CD8-positive, alpha-beta memory T cell (primary cell): ENCODE measurements at regions of chr3 and their contacts with region 1.

Region 1: DNA sequence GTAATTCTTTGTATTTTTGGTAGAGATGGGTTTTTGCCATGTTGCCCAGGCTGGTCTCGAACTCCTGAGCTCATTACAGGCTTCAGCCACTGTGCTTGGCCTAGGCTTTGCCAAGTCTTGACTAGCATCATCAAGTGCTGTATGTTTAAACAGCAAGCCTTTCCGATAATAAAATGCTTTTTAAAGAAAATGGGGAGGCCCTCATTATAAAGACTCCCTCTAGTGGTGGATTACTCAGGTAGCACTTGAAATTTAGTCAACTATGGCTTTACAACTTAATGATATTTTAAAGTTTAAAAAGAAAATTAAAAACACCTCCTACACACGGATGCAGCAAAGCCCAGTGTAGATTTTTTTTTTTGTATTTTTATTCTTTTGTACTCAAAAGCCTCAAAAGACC is 213.6 kb downstream of the GAP43 start:
- DNase-seq: no peak
- H3K4me3 ChIP-seq: no peak overlapping the region
- H3K4me3 Mint-ChIP-seq: no peak overlapping the region
- H3K27ac ChIP-seq: no peak overlapping the region
- H3K27ac Mint-ChIP-seq: no peak overlapping the region
- H3K4me1 ChIP-seq: no peaks in the 10 kb centered on the region
- H3K4me1 Mint-ChIP-seq: no peaks in the 10 kb centered on the region
- H3K27me3 ChIP-seq: no peaks in the 10 kb centered on the region
- H3K27me3 Mint-ChIP-seq: peaks cover 0 to 13% of the 10 kb centered on the region in 2 donors

Region 2: DNA sequence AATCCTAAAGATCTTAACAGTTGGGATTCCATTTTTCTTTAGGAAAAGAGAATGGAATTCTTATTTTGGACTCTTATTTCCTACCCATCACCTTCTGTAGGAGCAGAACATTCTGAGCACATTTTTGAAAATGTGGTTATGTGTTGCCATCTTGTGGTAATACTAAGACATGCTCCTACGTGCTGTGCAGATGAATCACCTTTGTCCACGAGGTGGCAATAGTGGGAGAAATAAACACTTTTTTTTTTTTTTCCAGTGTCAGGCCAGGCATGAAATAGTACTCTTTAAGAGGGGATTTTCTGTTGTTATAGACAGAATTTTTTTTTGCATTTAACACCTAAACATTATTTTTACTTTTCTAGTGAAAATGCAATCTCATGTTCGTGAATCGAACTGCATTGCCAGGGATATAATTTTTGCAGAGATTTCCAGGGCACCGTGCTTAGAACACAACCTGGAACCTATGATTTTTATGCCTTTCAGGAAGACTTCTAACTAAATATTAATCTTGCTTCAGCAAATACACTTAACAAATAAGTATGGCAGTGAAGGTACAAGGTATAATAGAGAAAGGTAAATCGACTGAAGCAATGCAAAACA is 17.1 kb before region 1 on chr3:
- CTCF ChIA-PET with region 1: interaction called, 13 read pairs
- POLR2A ChIA-PET with region 1: no interaction called
- DNase-seq: peak; percentile 26 to 76 (median 56)
- H3K4me3 ChIP-seq: no peak overlapping the region
- H3K4me3 Mint-ChIP-seq: no peak overlapping the region
- H3K27ac ChIP-seq: no peak overlapping the region
- H3K27ac Mint-ChIP-seq: no peak overlapping the region
- H3K4me1 ChIP-seq: no peaks in the 10 kb centered on the region
- H3K4me1 Mint-ChIP-seq: no peaks in the 10 kb centered on the region
- H3K27me3 ChIP-seq: no peaks in the 10 kb centered on the region
- H3K27me3 Mint-ChIP-seq: peaks cover 0 to 1% of the 10 kb centered on the region in 2 donors

Region 3: DNA sequence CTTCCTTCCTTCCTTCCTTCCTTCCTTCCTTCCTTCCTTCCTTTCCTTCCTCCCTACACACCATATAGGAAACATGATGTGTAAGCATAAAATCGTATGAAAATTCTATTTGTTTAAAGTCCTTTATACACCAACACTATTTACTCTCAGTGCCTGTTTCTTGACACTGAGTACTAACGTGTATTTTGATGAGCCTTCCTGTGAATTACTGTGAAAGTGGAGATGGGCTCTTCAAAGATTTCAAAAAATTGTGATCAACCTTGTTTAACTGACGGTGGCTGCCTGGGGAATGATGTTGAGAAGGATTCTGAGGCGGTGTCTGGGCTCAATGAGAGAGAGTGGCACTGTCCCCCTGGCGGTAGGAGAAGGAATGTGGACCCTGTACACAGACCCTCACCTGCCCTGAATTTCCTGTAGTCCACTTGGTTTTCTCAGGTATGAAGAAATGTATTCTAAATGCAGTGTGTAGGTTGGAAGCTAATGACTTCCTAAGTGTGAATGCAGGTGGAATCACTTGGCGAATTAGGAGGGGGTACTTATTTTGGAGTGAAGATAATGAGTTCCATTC is 24.3 kb after region 1 on chr3:
- CTCF ChIA-PET with region 1: no interaction called
- POLR2A ChIA-PET with region 1: no interaction called
- DNase-seq: no peak
- H3K4me3 ChIP-seq: no peak overlapping the region
- H3K4me3 Mint-ChIP-seq: no peak overlapping the region
- H3K27ac ChIP-seq: no peak overlapping the region
- H3K27ac Mint-ChIP-seq: no peak overlapping the region
- H3K4me1 ChIP-seq: no peaks in the 10 kb centered on the region
- H3K4me1 Mint-ChIP-seq: no peaks in the 10 kb centered on the region
- H3K27me3 ChIP-seq: no peaks in the 10 kb centered on the region
- H3K27me3 Mint-ChIP-seq: peaks cover 16 to 52% of the 10 kb centered on the region in 2 donors